BJ (cell line): ENCODE measurements at regions of chr1 and their contacts with region 1.

Region 1: DNA sequence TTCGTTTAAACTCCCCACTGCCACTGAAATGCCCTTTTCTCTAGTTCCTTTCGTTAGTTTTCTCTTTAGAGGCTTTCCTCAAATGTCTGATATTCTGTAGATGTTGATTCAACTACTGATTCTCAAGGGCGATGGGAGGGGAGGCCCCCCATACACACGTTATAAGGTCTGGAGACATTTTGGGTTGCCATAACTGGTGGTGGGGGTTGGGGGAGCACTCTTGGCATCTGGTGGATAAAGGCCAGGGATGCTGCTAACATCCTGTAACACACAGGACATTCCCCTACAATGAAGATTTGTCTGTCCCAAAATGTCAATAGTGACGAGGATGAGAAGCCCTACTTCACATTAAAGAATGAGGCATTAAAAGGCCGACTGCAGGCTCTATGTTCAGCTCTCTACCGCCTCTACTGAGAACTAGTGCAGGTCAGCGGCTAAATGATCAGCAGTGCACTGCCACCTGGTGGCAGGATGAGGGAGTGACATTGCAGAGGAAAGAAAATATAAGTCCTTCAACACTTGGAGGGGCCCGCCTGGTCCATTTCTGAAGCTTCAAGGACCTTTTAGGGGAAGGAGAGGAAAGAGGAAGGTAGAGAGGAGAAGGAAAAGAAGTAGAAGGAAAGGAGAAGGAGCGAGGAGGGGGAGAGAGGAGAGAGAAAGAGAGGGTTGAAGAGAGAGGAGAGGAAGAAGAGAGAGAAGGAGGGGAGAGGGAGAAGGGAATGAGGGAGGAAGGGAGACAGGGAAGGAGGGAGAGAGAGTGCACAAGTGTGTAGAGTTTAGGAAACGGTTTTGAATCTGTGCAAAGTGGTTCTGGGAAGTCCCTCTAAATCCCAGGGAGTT is 29.4 kb downstream of the ALG14 start:
- DNase-seq: no peak
- H3K4me3 ChIP-seq: no peak overlapping the region
- H3K27me3 ChIP-seq: no peaks in the 10 kb centered on the region
- CTCF ChIP-seq: peak; percentile 97

Region 2: GRCh38 chr1:94819941-94820746 is 223.2 kb before region 1 on chr1 and contains the start of gene SLC44A3:
- CTCF ChIA-PET with region 1: interaction called, 11 read pairs
- POLR2A ChIA-PET with region 1: no interaction called
- DNase-seq: no peak
- H3K4me3 ChIP-seq: peak within 1 kb of the TSS; percentile 61
- H3K27me3 ChIP-seq: peaks cover 17% of the 10 kb centered on the region
- CTCF ChIP-seq: peak; percentile 40
- polyA plus RNA-seq, gene SLC44A3: 1.1 and 2.1 TPM in 2 replicates

Region 3: DNA sequence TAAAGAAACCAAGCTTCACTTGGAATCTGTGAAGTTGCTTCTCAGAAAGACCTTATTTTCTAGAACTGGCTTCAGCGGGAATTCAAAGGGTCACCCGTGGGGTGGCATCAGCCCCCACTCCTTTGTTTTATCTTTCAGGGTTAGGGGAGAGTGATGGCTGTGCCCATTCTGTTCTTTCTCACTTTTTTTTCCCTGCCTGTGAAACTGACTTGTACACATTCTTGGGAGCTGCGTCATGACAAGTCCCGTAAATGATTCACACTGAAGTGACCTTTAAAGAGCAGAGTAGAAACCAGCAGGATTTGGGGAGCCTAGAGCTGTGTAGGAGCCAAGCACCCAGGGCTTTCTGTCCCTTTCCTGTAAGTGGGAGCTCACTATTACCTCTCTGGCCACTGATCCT is 179.4 kb before region 1 on chr1:
- CTCF ChIA-PET with region 1: interaction called, 21 read pairs
- POLR2A ChIA-PET with region 1: no interaction called
- DNase-seq: no peak
- H3K4me3 ChIP-seq: no peak overlapping the region
- H3K27me3 ChIP-seq: no peaks in the 10 kb centered on the region
- CTCF ChIP-seq: no peak

Region 4: DNA sequence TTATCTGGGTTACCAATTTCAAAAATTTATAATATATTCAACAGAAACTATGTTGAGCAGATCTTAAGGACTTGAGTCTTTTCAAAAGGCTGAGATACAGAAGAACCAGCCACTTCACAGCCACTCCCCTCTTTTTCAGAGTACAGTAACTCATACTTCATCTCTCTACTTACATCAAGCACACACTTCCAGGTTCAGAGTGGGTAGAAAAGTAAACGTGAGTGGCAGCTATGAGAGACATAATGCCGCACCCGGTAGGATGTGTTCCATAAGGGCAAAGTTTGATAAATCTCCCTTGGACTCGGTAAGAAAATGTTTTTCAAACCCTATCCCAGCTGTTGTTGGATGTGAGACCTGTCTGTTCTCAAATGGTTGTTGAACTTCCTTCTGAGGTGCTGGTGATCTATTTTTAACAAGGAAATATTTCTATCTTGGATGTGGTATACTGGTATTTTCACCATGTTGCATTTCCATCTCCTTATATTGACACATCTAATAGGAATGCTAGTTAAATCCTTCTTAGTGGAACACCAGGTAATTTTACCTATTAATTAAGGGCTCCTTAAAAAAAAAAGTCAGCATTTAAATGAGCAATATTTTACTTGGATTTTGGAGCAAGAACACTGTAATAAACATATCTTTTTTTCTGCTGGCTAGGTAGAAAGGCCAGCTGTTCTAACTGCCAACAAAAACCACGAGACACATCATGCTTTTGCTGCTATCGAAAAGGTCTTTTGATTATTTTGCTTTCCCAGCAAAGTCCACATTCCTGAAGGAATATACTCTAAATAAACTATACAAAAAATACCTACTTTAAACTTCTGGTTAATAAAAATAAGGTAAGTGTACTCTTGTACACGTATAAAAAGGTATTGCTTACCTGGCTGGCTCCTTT is 144.6 kb before region 1 on chr1:
- CTCF ChIA-PET with region 1: interaction called, 12 read pairs
- POLR2A ChIA-PET with region 1: no interaction called
- DNase-seq: no peak
- H3K4me3 ChIP-seq: no peak overlapping the region
- H3K27me3 ChIP-seq: no peaks in the 10 kb centered on the region
- CTCF ChIP-seq: no peak

Region 5: GRCh38 chr1:94926915-94927404 is 116.4 kb before region 1 on chr1 and contains the start of gene CNN3:
- CTCF ChIA-PET with region 1: interaction called, 11 read pairs
- POLR2A ChIA-PET with region 1: interaction called, 3 read pairs
- DNase-seq: peak; percentile 47
- H3K4me3 ChIP-seq: peak within 1 kb of the TSS; percentile 95
- H3K27me3 ChIP-seq: no peaks in the 10 kb centered on the region
- CTCF ChIP-seq: no peak
- polyA plus RNA-seq, gene CNN3: 169 and 217 TPM in 2 replicates

Region 6: DNA sequence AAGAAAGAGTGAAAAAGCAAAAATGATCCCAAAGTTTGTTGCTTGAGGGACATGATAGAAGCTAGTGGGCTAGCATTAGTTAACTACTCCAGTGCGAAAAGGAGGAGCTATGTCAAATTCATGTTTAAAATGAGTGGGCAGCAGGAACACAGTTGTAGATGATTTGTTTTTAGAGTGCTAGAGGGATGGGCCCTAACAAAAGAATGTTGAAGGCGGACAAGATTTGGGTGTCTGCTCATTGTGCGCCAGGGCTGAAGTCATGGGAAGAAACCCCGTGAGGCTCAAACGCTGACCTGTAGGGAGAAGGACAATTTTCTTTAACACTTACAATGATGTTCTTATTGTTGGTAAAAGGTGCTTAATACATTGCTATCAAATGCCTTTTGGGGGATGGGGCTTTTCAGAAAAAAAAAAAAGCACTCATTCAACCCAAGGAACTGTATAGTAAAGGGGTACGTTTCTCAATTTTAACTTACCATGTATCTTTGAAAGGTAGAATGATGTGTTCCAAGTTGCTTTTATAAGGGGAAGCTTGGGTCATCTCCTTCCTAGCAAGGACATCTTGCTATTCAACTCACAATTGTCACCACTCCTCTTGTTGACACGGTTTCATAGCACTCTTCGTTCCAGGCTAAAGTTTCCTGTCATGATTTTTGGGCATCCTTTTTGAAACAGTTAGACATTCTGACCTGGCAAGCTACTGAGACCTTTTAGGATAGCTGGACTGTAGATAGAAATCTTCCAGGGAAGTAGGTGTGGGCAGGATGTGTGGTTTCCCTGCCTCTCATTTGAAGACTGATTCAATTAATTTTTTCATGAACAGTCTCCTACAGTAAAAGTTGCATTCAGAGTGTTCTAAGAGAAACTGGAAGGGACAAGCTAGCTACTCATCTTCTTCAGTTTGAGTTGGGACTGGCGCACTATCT is 63.4 kb before region 1 on chr1:
- CTCF ChIA-PET with region 1: interaction called, 11 read pairs
- POLR2A ChIA-PET with region 1: no interaction called
- DNase-seq: no peak
- H3K4me3 ChIP-seq: no peak overlapping the region
- H3K27me3 ChIP-seq: no peaks in the 10 kb centered on the region
- CTCF ChIP-seq: no peak

Region 7: DNA sequence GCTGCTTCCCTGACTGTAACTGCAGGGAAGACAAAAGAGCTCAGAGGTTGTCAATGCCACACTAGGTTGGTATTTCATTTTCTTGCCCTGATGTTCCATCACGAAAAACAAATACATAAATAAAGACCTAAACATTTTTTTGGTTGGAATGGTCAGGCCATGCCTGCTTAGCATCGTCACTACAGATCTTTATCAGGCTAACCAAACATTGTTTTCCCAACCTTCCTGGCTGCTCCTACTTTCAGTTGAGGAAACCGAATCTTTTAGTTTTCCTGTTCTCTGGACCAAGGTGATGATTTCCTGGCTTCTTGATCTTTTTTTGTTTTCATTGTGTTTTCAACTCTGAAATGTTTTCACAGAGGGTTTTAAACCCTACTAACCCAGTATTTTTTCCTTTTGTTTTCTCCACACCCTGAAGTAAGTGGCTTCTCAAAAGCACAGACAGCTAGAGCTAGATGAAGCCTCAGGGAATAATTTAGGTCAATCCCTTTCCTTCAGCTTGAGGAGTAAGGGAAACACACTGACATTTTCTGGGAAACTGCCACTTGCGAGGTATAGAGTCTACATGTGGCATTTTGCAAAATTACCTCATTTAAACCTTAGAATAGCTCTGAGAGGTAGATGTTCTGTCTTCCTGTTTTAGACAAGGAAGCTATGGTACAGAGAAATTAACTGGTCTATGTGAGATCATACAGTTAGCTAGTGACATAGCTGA is 49.3 kb before region 1 on chr1:
- CTCF ChIA-PET with region 1: no interaction called
- POLR2A ChIA-PET with region 1: no interaction called
- DNase-seq: no peak
- H3K4me3 ChIP-seq: no peak overlapping the region
- H3K27me3 ChIP-seq: no peaks in the 10 kb centered on the region
- CTCF ChIP-seq: no peak

Region 8: DNA sequence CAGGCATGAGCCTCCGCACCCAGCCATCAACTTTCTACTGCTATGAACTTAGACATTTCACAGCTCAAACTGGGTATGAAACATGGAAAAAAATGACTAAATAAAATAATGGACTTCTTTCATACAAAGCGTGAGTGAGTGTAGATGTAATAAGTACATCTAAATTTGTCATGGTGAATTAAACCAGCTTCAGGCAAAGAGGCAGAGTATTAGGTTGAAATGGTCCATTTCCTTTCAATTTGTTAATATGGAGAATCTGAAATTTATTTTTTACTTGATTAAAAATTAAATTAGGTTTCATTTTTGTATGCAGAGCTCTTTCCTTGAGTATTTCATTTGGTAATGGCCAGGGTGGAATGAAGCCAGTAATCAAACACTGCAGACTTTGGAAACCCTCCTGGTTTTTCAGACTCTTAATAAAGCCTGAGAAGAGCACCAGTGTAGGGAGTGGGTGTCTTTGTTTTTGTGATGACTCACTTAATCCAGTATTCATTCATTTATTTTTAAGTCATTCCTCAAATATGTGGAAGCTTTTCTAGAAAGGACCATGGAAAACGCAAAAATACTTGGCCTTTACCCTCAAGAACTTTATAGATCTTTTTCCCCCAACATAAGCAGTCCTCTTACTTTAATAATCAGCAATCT is 19.8 kb before region 1 on chr1:
- CTCF ChIA-PET with region 1: interaction called, 21 read pairs
- POLR2A ChIA-PET with region 1: no interaction called
- DNase-seq: peak; percentile 90
- H3K4me3 ChIP-seq: no peak overlapping the region
- H3K27me3 ChIP-seq: no peaks in the 10 kb centered on the region
- CTCF ChIP-seq: no peak

Region 9: GRCh38 chr1:95068956-95069709 is 25.8 kb after region 1 on chr1:
- CTCF ChIA-PET with region 1: no interaction called
- POLR2A ChIA-PET with region 1: no interaction called
- DNase-seq: no peak
- H3K4me3 ChIP-seq: no peak overlapping the region
- H3K27me3 ChIP-seq: no peaks in the 10 kb centered on the region
- CTCF ChIP-seq: no peak

Region 10: DNA sequence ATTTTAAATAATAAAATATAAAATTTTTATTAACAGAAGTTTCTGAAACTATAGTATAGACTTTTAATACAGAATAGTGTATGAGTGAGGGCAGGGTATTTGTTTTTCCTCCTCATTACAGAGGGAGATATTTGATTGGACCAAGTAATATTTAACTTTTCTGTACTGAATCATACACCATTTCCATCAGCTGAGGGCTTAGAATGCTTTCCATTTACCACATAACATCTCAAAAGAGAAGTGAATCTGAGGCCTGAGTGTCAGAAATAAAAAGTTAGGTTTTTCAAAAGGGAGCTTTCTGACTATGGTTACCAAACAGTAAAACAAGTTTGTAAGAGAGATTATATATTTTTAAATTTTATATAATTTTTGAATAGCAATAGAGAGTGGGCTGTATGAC is 103.3 kb after region 1 on chr1:
- CTCF ChIA-PET with region 1: no interaction called
- POLR2A ChIA-PET with region 1: no interaction called
- DNase-seq: no peak
- H3K4me3 ChIP-seq: no peak overlapping the region
- H3K27me3 ChIP-seq: no peaks in the 10 kb centered on the region
- CTCF ChIP-seq: no peak